ENCODE measurements at regions of chr21 and their contacts with region 1.

Region 1: GRCh38 chr21:35358008-35358407 is 308.9 kb upstream of the RUNX1 start:
- DNase-seq: no peak
- ATAC-seq: no peak
- H3K4me3 ChIP-seq: no peak overlapping the region
- H3K27ac ChIP-seq: no peak overlapping the region
- H3K4me1 ChIP-seq: no peaks in the 10 kb centered on the region
- H3K27me3 ChIP-seq: no peaks in the 10 kb centered on the region
- CTCF ChIP-seq: no peak
- EP300 ChIP-seq: no peak
- POLR2A ChIP-seq: no peak
- RAD21 ChIP-seq: no peak

Region 2: DNA sequence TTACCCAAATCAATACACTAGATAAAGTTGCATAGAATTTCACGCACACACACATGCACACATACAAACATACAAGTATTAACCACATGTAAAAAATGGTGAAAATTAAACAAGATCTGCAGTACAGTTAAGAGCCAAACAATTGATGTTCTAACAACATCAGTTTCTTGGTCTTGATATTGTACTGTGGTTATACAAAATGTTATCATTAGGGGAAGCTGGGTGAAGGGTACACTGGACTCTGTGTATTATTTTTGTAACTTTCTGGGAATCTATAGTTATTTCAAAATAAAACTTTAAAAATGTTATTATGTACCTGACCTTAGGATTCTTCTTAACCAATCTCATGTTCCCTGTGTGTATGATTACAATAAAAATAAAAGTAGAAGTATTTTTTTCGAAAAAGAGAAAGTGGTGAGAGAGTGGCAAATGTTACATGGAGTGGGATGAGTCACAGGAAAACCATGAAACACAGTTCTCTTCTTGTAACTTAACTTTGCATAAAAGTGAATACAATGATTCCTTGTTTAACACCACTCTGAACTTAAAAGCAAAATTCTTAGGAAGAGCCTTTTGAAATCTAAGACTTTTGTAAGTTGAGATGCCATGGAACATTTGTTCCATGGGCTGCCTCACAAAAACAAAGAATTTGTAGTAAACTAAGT is 207.3 kb before region 1 on chr21:
- CTCF ChIA-PET with region 1: no interaction called
- POLR2A ChIA-PET with region 1: no interaction called
- in situ Hi-C with region 1: no loop called
- intact Hi-C with region 1: no loop called
- DNase-seq: no peak
- ATAC-seq: no peak
- H3K4me3 ChIP-seq: no peak overlapping the region
- H3K27ac ChIP-seq: no peak overlapping the region
- H3K4me1 ChIP-seq: peaks cover 0 to 7% of the 10 kb centered on the region in 2 experiments; a peak in 3 of 5 replicates
- H3K27me3 ChIP-seq: no peaks in the 10 kb centered on the region
- CTCF ChIP-seq: no peak
- EP300 ChIP-seq: no peak
- POLR2A ChIP-seq: no peak
- RAD21 ChIP-seq: 0 out of 4 replicates have a peak, but pooled peaks of 1 of the 2 experiments have one; percentile 1

Region 3: GRCh38 chr21:35204850-35205541 is 153.0 kb before region 1 on chr21:
- CTCF ChIA-PET with region 1: no interaction called
- POLR2A ChIA-PET with region 1: no interaction called
- in situ Hi-C with region 1: no loop called
- intact Hi-C with region 1: no loop called
- DNase-seq: peak; percentile 69 to 85 (median 73)
- ATAC-seq: peak; percentile 75
- H3K4me3 ChIP-seq: peak overlapping the region; percentile 18
- H3K27ac ChIP-seq: peak overlapping the region; percentile 85
- H3K4me1 ChIP-seq: peaks cover 24 to 48% of the 10 kb centered on the region in 2 experiments
- H3K27me3 ChIP-seq: no peaks in the 10 kb centered on the region
- CTCF ChIP-seq: peak; percentile 26 to 52 (median 42); a peak in 4 of 6 replicates
- EP300 ChIP-seq: no peak; the same call in 1 of the 2 replicates
- POLR2A ChIP-seq: no peak; the same call in 1 of the 2 replicates
- RAD21 ChIP-seq: peak; percentile 56 to 62

Region 4: GRCh38 chr21:35345954-35346353 is 12.1 kb before region 1 on chr21:
- CTCF ChIA-PET with region 1: no interaction called
- POLR2A ChIA-PET with region 1: interaction called, 12 read pairs
- in situ Hi-C with region 1: no loop called
- intact Hi-C with region 1: no loop called
- DNase-seq: no peak
- ATAC-seq: no peak
- H3K4me3 ChIP-seq: no peak overlapping the region
- H3K27ac ChIP-seq: no peak overlapping the region
- H3K4me1 ChIP-seq: peaks cover 0 to 40% of the 10 kb centered on the region in 2 experiments; a peak in 3 of 5 replicates
- H3K27me3 ChIP-seq: no peaks in the 10 kb centered on the region; a peak in 1 of 5 replicates
- CTCF ChIP-seq: no peak
- EP300 ChIP-seq: no peak
- POLR2A ChIP-seq: no peak
- RAD21 ChIP-seq: no peak

Region 5: GRCh38 chr21:35873441-35873840 is 515.4 kb after region 1 on chr21:
- CTCF ChIA-PET with region 1: no interaction called
- POLR2A ChIA-PET with region 1: no interaction called
- in situ Hi-C with region 1: no loop called
- intact Hi-C with region 1: no loop called
- DNase-seq: no peak
- ATAC-seq: no peak
- H3K4me3 ChIP-seq: no peak overlapping the region
- H3K27ac ChIP-seq: no peak overlapping the region
- H3K4me1 ChIP-seq: no peaks in the 10 kb centered on the region
- H3K27me3 ChIP-seq: no peaks in the 10 kb centered on the region
- CTCF ChIP-seq: no peak
- EP300 ChIP-seq: no peak
- POLR2A ChIP-seq: no peak
- RAD21 ChIP-seq: no peak

Measured in K562 (cell line).